Endothelial cell of umbilical vein (primary cell): ENCODE measurements at regions of chr20 and their contacts with region 1.

Region 1: DNA sequence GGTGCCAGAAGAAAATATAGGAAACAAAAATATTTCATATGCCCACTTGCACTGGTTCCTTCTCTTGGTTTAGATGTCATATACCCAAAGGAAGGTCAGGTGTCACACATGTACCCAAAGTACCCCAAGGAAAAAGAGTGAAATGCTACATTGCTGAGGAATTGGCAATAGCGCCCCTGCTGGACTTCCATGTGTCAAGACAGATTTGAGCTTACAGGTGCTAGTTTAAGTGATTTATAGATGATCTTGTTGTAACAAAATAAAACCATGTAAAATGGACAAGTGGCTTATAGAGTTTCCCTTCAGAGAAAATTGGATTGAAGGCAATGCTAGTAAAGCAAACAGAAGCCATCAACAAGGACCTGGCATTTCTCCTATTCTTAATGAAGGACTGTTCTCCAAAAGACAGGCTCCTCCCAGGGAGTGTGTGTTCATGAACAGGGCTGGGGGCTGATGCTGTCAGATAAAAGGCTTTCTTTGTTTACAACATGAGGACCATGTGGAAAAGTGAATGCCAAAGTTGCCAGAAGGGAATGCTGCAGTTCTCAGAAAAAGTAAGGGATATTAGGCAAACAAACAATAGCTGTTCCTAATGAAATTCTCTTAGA is 64.3 kb upstream of the PAK5 start:
- DNase-seq: peak; percentile 11
- H3K4me3 ChIP-seq: no peak overlapping the region
- H3K27ac ChIP-seq: no peak overlapping the region
- H3K4me1 ChIP-seq: no peaks in the 10 kb centered on the region
- H3K27me3 ChIP-seq: peaks cover 0 to 1% of the 10 kb centered on the region in 2 experiments
- CTCF ChIP-seq: peak; percentile 51 to 53
- POLR2A ChIP-seq: no peak

Region 2: GRCh38 chr20:9923648-9924047 is 20.5 kb after region 1 on chr20:
- CTCF ChIA-PET with region 1: interaction called, 13 read pairs
- POLR2A ChIA-PET with region 1: no interaction called
- dilution Hi-C with region 1: no loop called
- intact Hi-C with region 1: no loop called
- DNase-seq: no peak
- H3K4me3 ChIP-seq: no peak overlapping the region
- H3K27ac ChIP-seq: no peak overlapping the region
- H3K4me1 ChIP-seq: no peaks in the 10 kb centered on the region
- H3K27me3 ChIP-seq: peaks cover 0 to 2% of the 10 kb centered on the region in 2 experiments
- CTCF ChIP-seq: no peak
- POLR2A ChIP-seq: no peak